Mammary epithelial cell (primary cell): ENCODE measurements at regions of chr16 and their contacts with region 1.

Region 1: DNA sequence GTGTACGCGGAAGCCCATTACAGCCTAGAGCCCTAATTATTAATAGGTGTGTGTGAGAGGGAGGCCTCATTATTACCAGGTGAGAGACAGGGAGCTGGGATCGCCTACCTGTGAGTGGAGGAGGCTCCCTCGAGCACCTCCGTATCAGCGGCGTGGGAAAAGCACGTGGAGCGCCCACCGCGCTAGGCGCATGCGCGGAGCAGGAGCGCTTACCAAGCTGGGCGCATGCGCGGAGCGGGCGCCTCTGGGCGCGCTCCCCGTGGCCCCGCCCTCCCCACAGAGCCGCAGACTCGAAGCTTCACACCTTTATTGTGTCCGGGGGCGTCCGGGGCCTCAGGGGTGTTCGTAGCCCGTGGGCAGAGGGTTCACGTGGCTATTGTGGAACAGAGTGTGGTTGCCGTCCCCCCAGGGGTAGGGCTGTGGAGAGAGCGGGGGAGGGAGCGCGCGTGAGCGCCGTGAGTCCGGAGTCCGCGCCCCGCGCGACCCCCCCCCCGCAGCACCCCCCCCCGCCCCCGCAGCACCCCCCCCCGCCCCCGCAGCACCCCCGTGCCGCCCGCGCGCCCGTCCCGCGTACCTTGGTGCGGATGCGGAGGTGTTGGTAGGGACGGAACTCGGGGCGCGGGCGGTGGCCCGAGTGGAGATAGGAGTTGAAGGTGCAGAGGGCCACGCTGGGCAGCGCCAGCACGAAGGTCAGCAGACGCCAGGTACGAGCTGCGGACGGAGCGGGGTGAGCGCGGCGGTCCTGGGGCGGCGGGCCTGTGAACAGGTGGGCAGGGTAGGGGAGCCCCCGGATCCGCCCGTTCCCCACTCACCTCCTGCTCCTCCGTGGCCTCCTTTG is 500 bp downstream of the COX6A2 start:
- DNase-seq: no peak
- H3K4me3 ChIP-seq: peak overlapping the region in 2 of 3 experiments; percentile 24 to 26
- H3K27ac ChIP-seq: no peak overlapping the region
- H3K4me1 ChIP-seq: peaks cover 3% of the 10 kb centered on the region
- H3K27me3 ChIP-seq: peaks cover 2% of the 10 kb centered on the region
- CTCF ChIP-seq: no peak

Region 2: DNA sequence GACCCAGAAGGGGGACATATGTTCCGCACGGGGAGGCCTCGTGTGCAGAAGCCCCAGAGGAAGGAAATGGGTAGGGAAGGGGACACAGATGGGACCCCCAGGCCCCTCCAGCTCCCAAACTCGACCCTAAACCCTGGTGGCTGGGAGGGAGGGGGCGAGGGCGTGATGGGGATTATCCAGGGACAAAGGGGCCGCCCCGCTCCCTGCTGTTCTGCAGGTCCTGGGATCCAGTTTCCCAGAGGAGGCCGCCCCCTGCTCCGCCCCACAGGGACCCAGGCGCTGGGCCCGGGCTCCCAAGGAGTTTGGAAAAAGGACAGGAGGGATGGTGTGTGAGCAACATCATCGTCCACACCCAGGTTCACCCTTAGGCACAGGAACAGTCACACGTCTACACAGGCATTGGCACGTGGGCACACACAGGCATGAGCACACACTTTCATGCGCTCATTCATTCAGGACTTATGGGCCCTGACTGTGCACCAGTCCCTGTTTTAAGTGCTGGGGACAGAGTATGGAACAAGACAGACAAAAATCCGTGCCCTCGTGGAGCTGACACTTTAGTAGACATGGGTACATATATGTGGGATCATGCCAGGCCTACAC is 517.1 kb before region 1 on chr16:
- CTCF ChIA-PET with region 1: no interaction called
- dilution Hi-C with region 1: no loop called
- in situ Hi-C with region 1: no loop called
- intact Hi-C with region 1: no loop called
- DNase-seq: no peak
- H3K4me3 ChIP-seq: no peak overlapping the region
- H3K27ac ChIP-seq: no peak overlapping the region
- H3K4me1 ChIP-seq: no peaks in the 10 kb centered on the region
- H3K27me3 ChIP-seq: no peaks in the 10 kb centered on the region
- CTCF ChIP-seq: no peak

Region 3: DNA sequence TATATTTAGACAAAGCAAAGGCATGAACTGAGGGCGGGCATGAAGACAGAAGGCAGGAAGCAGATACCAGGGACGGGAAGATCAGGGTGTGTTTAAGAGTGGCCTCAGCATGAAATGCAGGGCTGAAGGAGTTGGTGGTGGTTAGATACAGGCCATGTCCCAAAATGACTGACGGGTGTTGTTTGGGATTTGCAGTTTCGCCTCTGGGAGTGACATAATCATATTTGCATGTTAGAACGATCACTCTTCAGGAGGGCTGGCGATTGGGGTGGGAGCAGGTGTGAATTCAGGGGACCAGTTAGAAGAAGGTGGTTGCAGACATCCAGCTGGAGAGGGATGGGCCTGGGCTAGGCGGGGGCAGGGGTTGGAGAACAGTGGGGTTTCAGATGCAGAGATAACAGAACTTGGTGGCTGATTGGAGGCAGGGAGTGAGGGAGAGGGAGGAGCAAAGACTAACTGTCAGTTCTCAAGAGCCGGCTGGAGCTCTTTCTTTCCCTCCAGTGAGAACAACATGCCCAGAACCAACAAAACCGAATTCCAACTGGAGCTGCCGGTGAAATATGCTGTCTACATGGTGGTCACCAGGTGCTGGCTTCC is 99.9 kb before region 1 on chr16:
- CTCF ChIA-PET with region 1: no interaction called
- dilution Hi-C with region 1: loop called (anchors 5 kb)
- in situ Hi-C with region 1: no loop called
- intact Hi-C with region 1: loop called (anchors 10 kb)
- DNase-seq: no peak
- H3K4me3 ChIP-seq: no peak overlapping the region
- H3K27ac ChIP-seq: no peak overlapping the region
- H3K4me1 ChIP-seq: peaks cover 6% of the 10 kb centered on the region
- H3K27me3 ChIP-seq: peaks cover 22% of the 10 kb centered on the region
- CTCF ChIP-seq: no peak

Region 4: GRCh38 chr16:31344712-31345111 is 82.9 kb before region 1 on chr16:
- CTCF ChIA-PET with region 1: no interaction called
- dilution Hi-C with region 1: no loop called
- in situ Hi-C with region 1: no loop called
- intact Hi-C with region 1: no loop called
- DNase-seq: no peak
- H3K4me3 ChIP-seq: no peak overlapping the region
- H3K27ac ChIP-seq: no peak overlapping the region
- H3K4me1 ChIP-seq: no peaks in the 10 kb centered on the region
- H3K27me3 ChIP-seq: no peaks in the 10 kb centered on the region
- CTCF ChIP-seq: no peak

Region 5: DNA sequence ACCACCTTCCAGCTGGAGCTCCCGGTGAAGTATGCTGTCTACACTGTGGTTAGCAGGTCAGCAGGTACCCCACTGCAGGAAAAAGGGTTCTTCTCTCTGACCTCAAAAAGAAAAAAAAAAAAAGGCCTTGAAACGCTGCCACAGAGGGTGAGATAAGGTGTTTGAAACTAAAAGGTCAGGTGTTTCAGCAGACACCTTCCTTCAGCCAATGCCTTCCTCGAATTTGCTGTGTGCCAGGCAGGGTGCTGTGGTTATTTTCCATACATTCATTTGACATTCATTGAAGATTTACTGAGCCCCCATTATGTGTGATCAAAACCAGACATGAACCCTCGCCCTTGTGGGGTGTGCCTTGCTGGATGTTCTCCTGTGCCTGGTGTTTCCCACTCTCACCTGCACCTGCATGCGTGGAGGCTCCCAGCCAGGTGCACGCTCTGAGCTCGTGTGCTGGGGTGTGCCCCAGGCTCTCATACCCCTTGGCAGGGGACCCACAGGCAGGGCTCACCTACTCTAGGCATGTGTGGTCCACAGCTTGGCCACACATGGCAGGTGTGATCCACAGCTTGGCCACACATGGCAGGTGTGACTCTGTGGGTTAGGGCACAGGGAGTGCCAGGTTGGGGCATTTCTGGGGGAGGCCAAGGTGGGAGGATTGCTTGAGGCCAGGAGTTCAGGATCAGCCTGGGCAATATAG is 50.3 kb before region 1 on chr16:
- CTCF ChIA-PET with region 1: no interaction called
- dilution Hi-C with region 1: loop called (anchors 5 kb)
- in situ Hi-C with region 1: no loop called
- intact Hi-C with region 1: loop called (anchors 5 kb)
- DNase-seq: no peak
- H3K4me3 ChIP-seq: no peak overlapping the region
- H3K27ac ChIP-seq: no peak overlapping the region
- H3K4me1 ChIP-seq: no peaks in the 10 kb centered on the region
- H3K27me3 ChIP-seq: no peaks in the 10 kb centered on the region
- CTCF ChIP-seq: no peak

Region 6: GRCh38 chr16:31861455-31861854 is 433.8 kb after region 1 on chr16:
- CTCF ChIA-PET with region 1: no interaction called
- dilution Hi-C with region 1: no loop called
- in situ Hi-C with region 1: no loop called
- intact Hi-C with region 1: no loop called
- DNase-seq: no peak
- H3K4me3 ChIP-seq: no peak overlapping the region
- H3K27ac ChIP-seq: no peak overlapping the region
- H3K4me1 ChIP-seq: no peaks in the 10 kb centered on the region
- H3K27me3 ChIP-seq: peaks cover 3% of the 10 kb centered on the region
- CTCF ChIP-seq: no peak